Activated T-helper 1 cell treated with anti-CD3 and anti-CD28 coated beads, Interleukin-12 subunit alpha, Interleukin-12 subunit beta, Interleukin-2, Interleukin-4 antibody, amounts not matched to agents 30 ng/mL and 10 ng/mL and 1 ng/mL, durations not matched to agents 14 hours and 24 hours and 36 hours (primary cell): ENCODE measurements at regions of chr9 and their contacts with region 1.

Region 1: GRCh38 chr9:19133549-19134345 is 6.5 kb upstream of the PLIN2 start:
- DNase-seq: no peak
- H3K4me3 Mint-ChIP-seq: no peak overlapping the region
- H3K27ac Mint-ChIP-seq: no peak overlapping the region
- H3K4me1 Mint-ChIP-seq: peaks cover 32% of the 10 kb centered on the region
- H3K27me3 Mint-ChIP-seq: no peaks in the 10 kb centered on the region

Region 2: DNA sequence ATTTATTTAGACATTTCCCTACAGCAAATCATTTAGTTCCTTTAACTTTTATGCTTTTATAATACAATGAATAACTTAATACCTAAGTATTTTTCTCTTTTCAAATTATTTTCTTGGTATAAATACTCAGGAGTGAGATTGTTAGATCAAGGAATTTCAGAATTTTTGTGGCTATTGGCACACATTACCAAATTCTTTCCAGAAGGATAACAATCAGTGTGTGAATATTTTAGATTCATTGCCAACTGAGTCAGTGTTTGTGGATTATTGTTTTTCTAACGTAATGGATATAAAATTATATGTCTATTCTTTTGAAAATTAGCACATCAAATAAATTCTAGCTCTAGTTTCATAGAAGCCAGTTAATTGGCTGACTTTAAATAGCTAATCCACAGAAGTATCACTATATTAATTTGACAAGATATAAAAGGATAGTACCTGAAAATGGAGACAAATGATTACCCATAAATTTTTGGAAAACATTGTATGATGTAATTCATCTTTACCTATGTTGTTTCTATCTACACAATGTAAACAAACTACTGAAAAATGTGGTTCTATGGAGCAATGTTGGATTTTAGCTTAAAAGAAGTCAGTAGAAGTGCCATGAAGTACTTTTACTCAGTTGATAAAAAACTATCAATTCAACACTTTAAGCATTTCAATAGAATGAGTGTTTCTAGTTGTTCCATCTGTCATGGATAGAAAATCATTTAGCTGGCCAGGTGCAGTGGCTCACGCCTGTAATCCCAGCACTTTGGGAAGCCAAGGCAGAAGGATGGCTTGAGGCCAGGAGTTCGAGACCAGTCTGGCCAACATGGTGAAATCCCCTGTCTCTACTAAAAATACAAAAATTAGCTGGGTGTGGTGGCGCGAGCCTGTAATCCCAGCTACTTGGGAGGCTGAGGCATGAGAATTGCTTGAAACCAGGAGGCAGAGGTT is 474.7 kb before region 1 on chr9:
- intact Hi-C with region 1: no loop called
- DNase-seq: no peak
- H3K4me3 Mint-ChIP-seq: no peak overlapping the region
- H3K27ac Mint-ChIP-seq: no peak overlapping the region
- H3K4me1 Mint-ChIP-seq: no peaks in the 10 kb centered on the region
- H3K27me3 Mint-ChIP-seq: no peaks in the 10 kb centered on the region

Region 3: DNA sequence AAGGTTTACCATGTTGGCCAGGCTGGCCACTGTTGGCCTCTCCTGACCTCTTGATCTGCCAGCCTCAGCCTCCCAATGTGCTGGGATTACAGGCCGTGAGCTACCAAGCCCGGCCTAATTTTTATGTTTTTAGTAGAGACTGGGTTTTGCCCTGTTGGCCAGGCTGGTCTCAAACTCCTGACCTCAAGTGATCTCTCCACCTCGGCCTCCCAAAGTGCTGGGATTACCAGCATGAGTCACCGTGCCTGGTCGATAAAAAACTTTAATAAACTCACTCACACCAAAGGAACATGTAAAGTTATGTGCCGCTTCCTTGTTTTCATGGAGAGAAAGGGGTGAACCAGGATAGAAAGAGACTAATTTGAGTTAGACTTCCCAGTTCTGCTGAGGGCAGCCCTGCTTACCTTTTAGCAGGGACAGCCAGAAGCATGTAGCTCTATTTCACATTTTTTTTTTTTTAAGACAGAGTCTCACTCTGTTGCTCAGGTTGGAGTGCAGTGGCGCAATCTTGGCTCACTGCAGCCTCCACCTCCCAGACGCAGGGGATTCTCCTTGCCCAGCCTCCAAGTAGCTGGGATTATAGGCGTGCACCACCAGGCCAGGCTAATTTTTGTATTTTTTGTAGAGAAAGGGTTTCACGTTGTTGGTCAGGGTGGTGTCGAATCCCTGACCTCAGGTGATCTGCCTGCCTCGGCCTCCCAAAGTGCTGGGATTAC is 19.6 kb before region 1 on chr9:
- intact Hi-C with region 1: no loop called
- DNase-seq: no peak
- H3K4me3 Mint-ChIP-seq: no peak overlapping the region
- H3K27ac Mint-ChIP-seq: no peak overlapping the region
- H3K4me1 Mint-ChIP-seq: no peaks in the 10 kb centered on the region
- H3K27me3 Mint-ChIP-seq: no peaks in the 10 kb centered on the region

Region 4: DNA sequence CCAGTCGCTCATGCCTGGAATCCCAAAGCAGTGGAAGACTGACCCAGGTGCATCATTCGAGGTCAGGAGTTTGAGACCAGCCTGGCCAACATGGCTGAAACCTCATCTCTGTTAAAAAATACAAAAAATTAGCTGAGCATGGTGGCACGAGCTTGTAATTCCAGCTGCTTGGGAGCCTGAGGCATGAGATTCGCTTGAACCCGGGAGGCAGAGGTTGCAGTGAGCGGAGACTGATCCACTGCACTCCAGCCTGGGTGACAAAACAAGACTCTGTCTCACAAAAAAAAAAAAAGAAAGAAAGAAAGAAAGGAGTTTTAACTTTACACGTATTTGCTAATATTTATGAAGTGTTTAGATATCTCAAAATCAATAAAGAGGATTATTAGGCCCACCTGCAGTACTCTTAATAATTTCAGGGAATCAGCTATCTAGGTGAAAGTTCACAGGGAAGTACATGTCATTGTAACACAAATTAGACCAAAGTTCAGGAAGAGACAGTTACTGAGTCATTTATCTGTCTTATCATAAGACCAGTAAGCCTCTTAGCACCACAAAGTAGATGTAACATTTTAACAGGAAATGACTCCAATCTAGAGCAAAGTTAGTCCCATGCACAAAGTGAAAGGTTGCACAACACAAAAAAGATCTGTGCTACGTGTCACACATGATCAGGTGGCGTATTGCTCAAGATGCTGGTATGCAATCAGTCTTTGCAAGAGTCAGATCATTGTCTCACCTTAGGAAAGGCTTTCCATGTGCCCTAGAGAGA is 27.7 kb after region 1 on chr9:
- intact Hi-C with region 1: loop called (anchors 1 kb)
- DNase-seq: peak; percentile 60
- H3K4me3 Mint-ChIP-seq: peak overlapping the region; percentile 48
- H3K27ac Mint-ChIP-seq: peak overlapping the region; percentile 95
- H3K4me1 Mint-ChIP-seq: peaks cover 19% of the 10 kb centered on the region
- H3K27me3 Mint-ChIP-seq: no peaks in the 10 kb centered on the region